HepG2 (cell line): ENCODE measurements at regions of chr17 and their contacts with region 1.

Region 1: GRCh38 chr17:74873038-74873873 is 462 bp upstream of the FDXR start:
- DNase-seq: peak; percentile 100
- ATAC-seq: peak; percentile 87
- H3K4me3 ChIP-seq: peak overlapping the region; percentile 70 to 95 (median 85)
- H3K27ac ChIP-seq: peak overlapping the region; percentile 70
- H3K4me1 ChIP-seq: peaks cover 84% of the 10 kb centered on the region
- H3K27me3 ChIP-seq: peaks cover 0 to 7% of the 10 kb centered on the region in 2 experiments; a peak in 4 of 5 replicates
- CTCF ChIP-seq: no peak
- EP300 ChIP-seq: peak; percentile 18 to 55; a peak in 1 of 4 replicates
- POLR2A ChIP-seq: peak; percentile 96 to 98
- RAD21 ChIP-seq: no peak; the same call in 1 of the 2 replicates

Region 2: GRCh38 chr17:74736513-74737298 is 136.6 kb before region 1 on chr17 and contains the start of gene RAB37:
- CTCF ChIA-PET with region 1: no interaction called
- POLR2A ChIA-PET with region 1: interaction called, 60 read pairs
- in situ Hi-C with region 1: no loop called
- intact Hi-C with region 1: no loop called
- DNase-seq: peak; percentile 99
- ATAC-seq: peak; percentile 82
- H3K4me3 ChIP-seq: peak within 1 kb of the TSS; percentile 39 to 78 (median 67)
- H3K27ac ChIP-seq: peak within 1 kb of the TSS; percentile 69
- H3K4me1 ChIP-seq: peaks cover 59% of the 10 kb centered on the region
- H3K27me3 ChIP-seq: peaks cover 8 to 37% of the 10 kb centered on the region in 2 experiments; a peak in 4 of 5 replicates
- CTCF ChIP-seq: peak; percentile 81
- EP300 ChIP-seq: peak; percentile 85 to 87
- POLR2A ChIP-seq: peak; percentile 42 to 71
- RAD21 ChIP-seq: peak; percentile 87
- total RNA-seq, gene RAB37: 0.91 and 1.1 TPM in 2 replicates

Region 3: DNA sequence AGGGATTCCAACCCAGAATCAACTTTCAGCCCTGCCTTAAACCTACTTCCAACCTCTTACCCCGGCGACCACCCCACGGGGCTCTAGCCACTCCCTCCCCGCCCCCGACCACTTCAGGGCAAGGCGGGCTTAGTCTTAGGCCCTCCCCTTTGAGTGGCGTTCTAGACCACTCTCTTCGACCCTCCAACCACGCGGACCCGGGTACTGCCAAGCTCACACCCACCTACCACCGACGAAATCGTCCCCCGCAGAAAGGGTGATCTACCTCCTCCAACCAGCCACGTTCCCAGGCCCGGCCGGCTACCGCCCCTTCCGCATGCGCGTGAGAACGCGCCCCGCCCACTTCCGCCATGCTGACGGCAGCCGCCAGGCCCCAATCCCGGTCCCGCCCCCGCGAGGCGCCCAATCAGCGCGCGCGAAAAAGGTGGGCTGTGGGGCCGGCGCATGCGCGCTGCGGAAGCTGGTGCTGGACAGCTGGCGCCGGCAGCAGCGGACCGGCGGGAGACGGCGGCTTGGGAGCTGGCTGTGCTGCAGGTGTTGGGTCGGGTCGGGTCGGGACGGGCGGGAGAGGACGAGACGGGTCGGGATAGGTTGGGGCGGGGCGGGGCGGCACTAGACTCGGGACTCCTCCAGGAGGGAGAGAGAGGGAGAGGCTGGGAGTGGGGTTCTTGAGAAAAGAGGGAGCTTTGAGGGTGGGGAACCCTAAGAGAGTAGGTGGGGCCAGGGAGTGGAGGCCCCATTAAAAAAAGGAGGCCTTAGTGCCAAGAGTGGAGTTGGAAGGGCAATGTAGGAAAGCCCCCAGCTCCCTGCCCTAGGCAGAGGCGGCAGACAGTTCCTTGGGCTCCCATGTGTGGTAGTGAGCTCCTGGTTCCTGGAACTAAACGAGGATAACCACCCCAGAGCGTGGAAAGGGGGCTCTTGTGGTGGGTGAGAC is 96.9 kb before region 1 on chr17 and contains the start of gene NAT9:
- CTCF ChIA-PET with region 1: no interaction called
- POLR2A ChIA-PET with region 1: interaction called, 45 read pairs
- in situ Hi-C with region 1: no loop called
- intact Hi-C with region 1: no loop called
- DNase-seq: peak; percentile 94
- ATAC-seq: peak; percentile 74
- H3K4me3 ChIP-seq: peak within 1 kb of the TSS; percentile 83 to 95 (median 94)
- H3K27ac ChIP-seq: peak within 1 kb of the TSS; percentile 71
- H3K4me1 ChIP-seq: peaks cover 52% of the 10 kb centered on the region
- H3K27me3 ChIP-seq: no peaks in the 10 kb centered on the region; a peak in 1 of 5 replicates
- CTCF ChIP-seq: 0 out of 2 replicates have a peak, but pooled peaks have one; percentile 6
- EP300 ChIP-seq: 0 out of 4 replicates have a peak, but pooled peaks of 1 of the 2 experiments have one; percentile 43
- POLR2A ChIP-seq: peak; percentile 76 to 92
- RAD21 ChIP-seq: no peak; the same call in 1 of the 2 replicates
- total RNA-seq, gene NAT9: 37.6 and 44.2 TPM in 2 replicates

Region 4: GRCh38 chr17:74852237-74853047 is 20.8 kb before region 1 on chr17:
- CTCF ChIA-PET with region 1: no interaction called
- POLR2A ChIA-PET with region 1: interaction called, 22 read pairs
- in situ Hi-C with region 1: no loop called
- intact Hi-C with region 1: no loop called
- DNase-seq: peak; percentile 67
- ATAC-seq: peak; percentile 58
- H3K4me3 ChIP-seq: peak overlapping the region; percentile 33 to 64 (median 50); a peak in 5 of 6 replicates
- H3K27ac ChIP-seq: no peak overlapping the region
- H3K4me1 ChIP-seq: peaks cover 9% of the 10 kb centered on the region
- H3K27me3 ChIP-seq: peaks cover 15 to 91% of the 10 kb centered on the region in 2 experiments
- CTCF ChIP-seq: peak; percentile 2; the same call in 1 of the 2 replicates
- EP300 ChIP-seq: no peak
- POLR2A ChIP-seq: no peak
- RAD21 ChIP-seq: no peak

Region 5: GRCh38 chr17:74907012-74907411 is 33.8 kb after region 1 on chr17:
- CTCF ChIA-PET with region 1: no interaction called
- POLR2A ChIA-PET with region 1: interaction called, 12 read pairs
- in situ Hi-C with region 1: no loop called
- intact Hi-C with region 1: no loop called
- DNase-seq: no peak
- ATAC-seq: no peak
- H3K4me3 ChIP-seq: no peak overlapping the region
- H3K27ac ChIP-seq: no peak overlapping the region
- H3K4me1 ChIP-seq: peaks cover 21% of the 10 kb centered on the region; the same call in 1 of the 2 replicates
- H3K27me3 ChIP-seq: peaks cover 3 to 25% of the 10 kb centered on the region in 2 experiments
- CTCF ChIP-seq: no peak
- EP300 ChIP-seq: no peak
- POLR2A ChIP-seq: no peak
- RAD21 ChIP-seq: no peak

Region 6: DNA sequence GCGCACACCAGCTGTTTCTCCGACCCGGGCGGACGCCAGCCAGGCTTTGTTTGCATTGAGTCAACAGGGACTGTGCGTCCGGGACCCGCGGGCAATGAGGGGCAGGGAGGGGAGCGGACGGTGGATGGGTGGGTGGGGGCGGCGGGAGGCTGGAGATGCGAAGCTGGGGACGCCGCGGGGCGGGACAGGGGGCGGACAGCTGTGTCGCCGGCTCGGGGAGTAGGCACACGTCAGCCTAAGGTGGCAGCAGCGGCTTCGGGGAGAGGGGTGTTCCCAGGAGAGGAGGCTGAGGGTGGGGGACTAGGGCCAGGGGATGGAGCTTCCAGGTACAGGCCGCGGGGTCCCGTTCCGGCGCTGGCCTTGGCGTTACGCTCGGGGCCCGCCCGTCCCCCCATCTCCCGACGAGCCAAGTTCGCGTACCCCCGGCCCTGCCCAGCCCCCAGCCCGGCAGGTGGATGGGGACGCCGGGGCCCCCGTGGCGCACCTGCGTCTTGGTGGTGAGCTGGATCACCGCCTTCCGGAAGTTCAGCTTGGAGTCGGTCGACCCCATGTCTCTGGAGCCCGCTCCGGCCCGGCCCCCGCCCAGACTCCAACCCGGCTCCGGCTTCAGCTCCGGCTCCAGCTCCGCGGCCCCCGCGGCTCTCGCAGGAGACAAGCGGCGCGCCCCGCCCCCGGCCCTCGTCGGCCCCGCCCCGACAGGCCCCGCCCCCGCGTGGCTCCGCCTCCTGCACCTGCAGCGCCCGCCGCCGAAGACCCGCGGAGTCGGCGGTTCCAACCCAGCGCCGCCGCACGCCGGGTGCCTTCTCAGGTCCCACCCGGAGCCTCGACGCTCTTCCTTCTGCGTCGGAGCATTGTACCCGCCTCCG is 99.1 kb after region 1 on chr17 and contains the start of gene HID1:
- CTCF ChIA-PET with region 1: no interaction called
- POLR2A ChIA-PET with region 1: interaction called, 12 read pairs
- in situ Hi-C with region 1: no loop called
- intact Hi-C with region 1: no loop called
- DNase-seq: peak; percentile 73
- ATAC-seq: peak; percentile 90
- H3K4me3 ChIP-seq: peak within 1 kb of the TSS; percentile 67 to 83 (median 70)
- H3K27ac ChIP-seq: no peak within 1 kb of the TSS
- H3K4me1 ChIP-seq: peaks cover 54% of the 10 kb centered on the region
- H3K27me3 ChIP-seq: peaks cover 5 to 50% of the 10 kb centered on the region in 2 experiments; a peak in 4 of 5 replicates
- CTCF ChIP-seq: 0 out of 2 replicates have a peak, but pooled peaks have one; percentile 17
- EP300 ChIP-seq: no peak
- POLR2A ChIP-seq: no peak
- RAD21 ChIP-seq: peak; percentile 15; the same call in 1 of the 2 replicates
- total RNA-seq, gene HID1: 1.7 and 2.1 TPM in 2 replicates

Region 7: DNA sequence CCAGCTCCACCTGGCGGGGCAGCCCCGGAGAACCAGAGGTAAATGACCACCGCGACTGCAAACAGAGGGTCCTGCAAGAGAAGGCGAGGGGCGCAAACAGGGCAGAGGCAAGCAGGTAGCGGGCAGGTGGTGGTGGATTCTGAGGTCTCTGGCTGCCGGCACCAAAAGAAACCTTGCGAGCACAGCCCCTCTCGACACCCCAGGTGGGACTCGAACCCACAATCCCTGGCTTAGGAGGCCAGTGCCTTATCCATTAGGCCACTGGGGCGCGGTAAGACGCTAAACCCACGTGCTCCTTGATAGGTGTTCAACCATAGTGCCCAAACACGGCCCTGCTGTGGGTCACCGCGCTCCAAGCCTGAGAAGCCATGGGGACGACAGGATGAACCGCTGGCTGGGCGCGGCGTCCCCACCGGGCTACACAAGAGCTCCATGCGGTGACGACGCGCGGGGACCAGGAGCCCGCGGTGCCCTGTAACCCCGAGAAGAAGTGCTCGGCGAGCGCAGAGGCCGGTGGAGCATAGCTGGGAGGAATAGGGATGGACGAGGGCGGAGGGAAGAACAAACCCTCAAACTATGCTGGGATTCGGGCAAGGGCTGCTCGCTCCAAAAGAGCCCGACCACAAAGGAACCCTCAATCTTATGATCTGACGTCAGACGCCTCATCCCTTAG is 161.1 kb after region 1 on chr17:
- CTCF ChIA-PET with region 1: no interaction called
- POLR2A ChIA-PET with region 1: interaction called, 14 read pairs
- in situ Hi-C with region 1: no loop called
- intact Hi-C with region 1: no loop called
- DNase-seq: peak; percentile 94
- ATAC-seq: peak; percentile 58
- H3K4me3 ChIP-seq: peak overlapping the region; percentile 76 to 93 (median 91)
- H3K27ac ChIP-seq: peak overlapping the region; percentile 94
- H3K4me1 ChIP-seq: peaks cover 37% of the 10 kb centered on the region
- H3K27me3 ChIP-seq: peaks cover 0 to 6% of the 10 kb centered on the region in 2 experiments; a peak in 3 of 5 replicates
- CTCF ChIP-seq: peak; percentile 48
- EP300 ChIP-seq: no peak
- POLR2A ChIP-seq: no peak
- RAD21 ChIP-seq: no peak